Tibial artery (tissue), 4 donors: ENCODE measurements at regions of chr15 and their contacts with region 1.

Region 1: GRCh38 chr15:100308213-100308600 is 33.6 kb downstream of the ADAMTS17 start:
- DNase-seq: peak in 1 of 2 donors; percentile 49
- H3K4me3 ChIP-seq: peak overlapping the region; percentile 10 to 42
- H3K27ac ChIP-seq: peak overlapping the region; percentile 54 to 60
- H3K4me1 ChIP-seq: peaks cover 0 to 33% (median 25%) of the 10 kb centered on the region in 4 donors
- H3K27me3 ChIP-seq: no peaks in the 10 kb centered on the region
- CTCF ChIP-seq: no peak

Region 2: GRCh38 chr15:100234158-100235029 is 73.8 kb before region 1 on chr15:
- intact Hi-C with region 1: loop called (anchors 10 kb)
- DNase-seq: peak; percentile 49 to 70
- H3K4me3 ChIP-seq: no peak overlapping the region
- H3K27ac ChIP-seq: no peak overlapping the region
- H3K4me1 ChIP-seq: peaks cover 0 to 8% (median 2%) of the 10 kb centered on the region in 4 donors
- H3K27me3 ChIP-seq: peaks cover 0 to 4% of the 10 kb centered on the region in 2 donors
- CTCF ChIP-seq: no peak

Region 3: DNA sequence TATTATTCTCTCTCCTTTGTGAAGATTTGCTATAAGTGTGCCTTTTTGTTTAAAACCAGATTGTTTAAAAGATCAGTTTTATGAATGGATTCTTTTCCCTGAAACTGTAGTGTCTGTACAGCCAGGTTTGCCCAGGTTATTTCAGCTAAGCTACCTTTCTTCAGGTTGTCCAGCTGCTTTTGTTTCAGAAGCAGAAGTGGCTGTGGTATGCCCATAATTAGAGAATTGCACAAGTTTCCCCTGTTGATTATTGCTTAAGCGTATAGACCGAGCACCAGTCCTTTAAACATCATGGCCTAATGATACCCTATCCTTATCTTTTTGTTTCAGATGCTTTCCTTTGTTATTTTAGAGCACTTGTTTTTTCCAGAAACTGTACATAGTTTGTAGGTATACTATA is 304.3 kb after region 1 on chr15:
- intact Hi-C with region 1: no loop called
- DNase-seq: no peak
- H3K4me3 ChIP-seq: no peak overlapping the region
- H3K27ac ChIP-seq: no peak overlapping the region
- H3K4me1 ChIP-seq: no peaks in the 10 kb centered on the region
- H3K27me3 ChIP-seq: no peaks in the 10 kb centered on the region
- CTCF ChIP-seq: no peak